ENCODE measurements at regions of chr5 and their contacts with region 1.

Region 1: GRCh38 chr5:127916885-127917573 is 166.5 kb upstream of the SLC12A2 start:
- DNase-seq: no peak
- H3K4me3 ChIP-seq: no peak overlapping the region
- H3K27ac ChIP-seq: no peak overlapping the region
- H3K4me1 ChIP-seq: no peaks in the 10 kb centered on the region
- H3K27me3 ChIP-seq: no peaks in the 10 kb centered on the region
- CTCF ChIP-seq: no peak

Region 2: GRCh38 chr5:127838661-127839060 is 78.4 kb before region 1 on chr5:
- CTCF ChIA-PET with region 1: no interaction called
- POLR2A ChIA-PET with region 1: no interaction called
- intact Hi-C with region 1: no loop called
- DNase-seq: no peak
- H3K4me3 ChIP-seq: no peak overlapping the region
- H3K27ac ChIP-seq: no peak overlapping the region
- H3K4me1 ChIP-seq: peaks cover 5% of the 10 kb centered on the region; the same call in 1 of the 2 replicates
- H3K27me3 ChIP-seq: no peaks in the 10 kb centered on the region
- CTCF ChIP-seq: no peak

Region 3: GRCh38 chr5:127988146-127988760 is 71.2 kb after region 1 on chr5:
- CTCF ChIA-PET with region 1: no interaction called
- POLR2A ChIA-PET with region 1: interaction called, 10 read pairs
- intact Hi-C with region 1: no loop called
- DNase-seq: peak; percentile 53 to 81
- H3K4me3 ChIP-seq: no peak overlapping the region
- H3K27ac ChIP-seq: peak overlapping the region; percentile 49
- H3K4me1 ChIP-seq: peaks cover 14% of the 10 kb centered on the region
- H3K27me3 ChIP-seq: no peaks in the 10 kb centered on the region
- CTCF ChIP-seq: no peak

Measured in PC-9 (cell line).